Activated CD4-positive, alpha-beta T cell treated with anti-CD3 and anti-CD28 coated beads for 36 hours (primary cell): ENCODE measurements at regions of chr10 and their contacts with region 1.

Region 1: DNA sequence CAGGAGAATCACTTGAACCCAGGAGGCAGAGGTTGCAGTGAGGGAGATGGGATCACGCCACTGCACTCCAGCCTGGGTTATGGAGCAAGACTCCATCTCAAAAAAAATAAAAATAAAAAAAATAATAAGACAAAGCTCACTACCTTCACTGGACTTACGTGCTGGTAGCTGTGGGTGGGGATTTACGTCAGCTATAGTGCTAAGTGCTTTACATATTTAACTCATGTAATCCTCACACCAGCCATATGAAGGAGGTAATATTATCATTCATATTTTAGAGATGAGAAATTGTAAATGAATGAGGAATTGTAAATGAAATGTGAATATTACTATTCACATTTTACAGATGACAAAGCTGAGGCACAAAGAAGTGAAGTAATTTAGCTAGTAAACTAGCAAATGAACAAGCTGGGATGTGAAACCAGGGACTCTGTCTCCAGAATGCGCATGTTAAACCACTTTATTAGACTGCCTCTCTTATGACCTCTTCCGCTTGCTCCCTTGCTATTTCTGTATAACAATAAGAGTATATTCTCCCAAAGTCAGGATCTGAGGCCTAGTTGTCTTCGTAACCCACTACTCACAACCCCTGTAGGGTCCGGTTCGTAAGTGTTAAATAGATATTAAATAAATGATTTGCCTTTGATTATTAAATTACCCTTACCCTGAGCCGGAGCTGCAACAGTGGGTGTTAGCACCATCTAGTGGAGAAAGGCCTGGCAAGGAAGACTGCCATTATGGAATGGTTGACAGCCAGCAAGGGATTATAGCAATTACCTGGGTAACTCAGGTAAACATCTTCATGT is 70.2 kb downstream of the HTR7 start:
- DNase-seq: peak; percentile 48
- ATAC-seq: no peak
- H3K4me3 Mint-ChIP-seq: no peak overlapping the region
- H3K27ac Mint-ChIP-seq: no peak overlapping the region
- H3K4me1 Mint-ChIP-seq: no peaks in the 10 kb centered on the region
- H3K27me3 Mint-ChIP-seq: peaks cover 7% of the 10 kb centered on the region

Region 2: GRCh38 chr10:89954787-89955566 is 832.6 kb before region 1 on chr10:
- CTCF ChIA-PET with region 1: no interaction called
- POLR2A ChIA-PET with region 1: no interaction called
- intact Hi-C with region 1: loop called in 1 of 2 experiments (anchors 5 kb)
- DNase-seq: peak; percentile 6
- ATAC-seq: peak; percentile 47
- H3K4me3 Mint-ChIP-seq: no peak overlapping the region
- H3K27ac Mint-ChIP-seq: no peak overlapping the region
- H3K4me1 Mint-ChIP-seq: peaks cover 2% of the 10 kb centered on the region
- H3K27me3 Mint-ChIP-seq: peaks cover 5% of the 10 kb centered on the region

Region 3: GRCh38 chr10:90751107-90751997 is 36.2 kb before region 1 on chr10:
- CTCF ChIA-PET with region 1: interaction called, 6 read pairs
- POLR2A ChIA-PET with region 1: no interaction called
- intact Hi-C with region 1: loop called in 1 of 2 experiments (anchors 5 kb)
- DNase-seq: peak; percentile 62
- ATAC-seq: peak; percentile 58
- H3K4me3 Mint-ChIP-seq: no peak overlapping the region
- H3K27ac Mint-ChIP-seq: no peak overlapping the region
- H3K4me1 Mint-ChIP-seq: no peaks in the 10 kb centered on the region
- H3K27me3 Mint-ChIP-seq: peaks cover 11% of the 10 kb centered on the region

Region 4: DNA sequence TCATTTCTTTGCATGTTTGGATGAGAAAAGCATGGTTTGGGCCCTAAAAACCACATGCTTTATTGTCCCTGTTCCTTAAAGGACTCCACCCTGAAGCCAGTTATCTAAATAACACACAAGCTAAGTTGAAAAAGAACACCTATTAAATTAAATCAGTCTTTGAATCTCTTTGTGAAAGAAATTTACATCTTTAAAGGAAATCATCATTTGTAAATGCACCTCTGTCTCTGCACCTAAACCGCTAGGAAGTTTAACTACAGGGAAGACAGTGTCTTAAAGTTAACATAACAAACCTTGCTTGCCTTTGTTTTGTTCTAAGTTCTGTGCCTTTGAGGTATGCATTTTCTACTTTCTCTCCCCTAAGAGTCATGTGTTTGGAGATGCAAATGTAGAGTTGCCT is 17.6 kb after region 1 on chr10:
- CTCF ChIA-PET with region 1: interaction called, 11 read pairs
- POLR2A ChIA-PET with region 1: no interaction called
- intact Hi-C with region 1: no loop called
- DNase-seq: no peak
- ATAC-seq: no peak
- H3K4me3 Mint-ChIP-seq: no peak overlapping the region
- H3K27ac Mint-ChIP-seq: no peak overlapping the region
- H3K4me1 Mint-ChIP-seq: no peaks in the 10 kb centered on the region
- H3K27me3 Mint-ChIP-seq: peaks cover 3% of the 10 kb centered on the region

Region 5: GRCh38 chr10:91579329-91579985 is 791.9 kb after region 1 on chr10:
- CTCF ChIA-PET with region 1: no interaction called
- POLR2A ChIA-PET with region 1: no interaction called
- intact Hi-C with region 1: no loop called
- DNase-seq: no peak
- ATAC-seq: no peak
- H3K4me3 Mint-ChIP-seq: no peak overlapping the region
- H3K27ac Mint-ChIP-seq: no peak overlapping the region
- H3K4me1 Mint-ChIP-seq: no peaks in the 10 kb centered on the region
- H3K27me3 Mint-ChIP-seq: peaks cover 7% of the 10 kb centered on the region